ENCODE measurements at regions of chr3 and their contacts with region 1.

Region 1: GRCh38 chr3:80929576-80929975 is 831.9 kb downstream of the GBE1 start:
- DNase-seq: no peak
- H3K4me3 ChIP-seq: no peak overlapping the region
- H3K27ac ChIP-seq: no peak overlapping the region
- H3K4me1 ChIP-seq: no peaks in the 10 kb centered on the region
- H3K27me3 ChIP-seq: no peaks in the 10 kb centered on the region
- CTCF ChIP-seq: no peak
- POLR2A ChIP-seq: no peak

Region 2: GRCh38 chr3:80914854-80915253 is 14.7 kb before region 1 on chr3:
- CTCF ChIA-PET with region 1: interaction called, 14 read pairs
- POLR2A ChIA-PET with region 1: no interaction called
- dilution Hi-C with region 1: no loop called
- intact Hi-C with region 1: no loop called
- DNase-seq: no peak
- H3K4me3 ChIP-seq: no peak overlapping the region
- H3K27ac ChIP-seq: no peak overlapping the region
- H3K4me1 ChIP-seq: no peaks in the 10 kb centered on the region
- H3K27me3 ChIP-seq: no peaks in the 10 kb centered on the region
- CTCF ChIP-seq: no peak
- POLR2A ChIP-seq: no peak